ENCODE measurements at regions of chr22 and their contacts with region 1.

Region 1: DNA sequence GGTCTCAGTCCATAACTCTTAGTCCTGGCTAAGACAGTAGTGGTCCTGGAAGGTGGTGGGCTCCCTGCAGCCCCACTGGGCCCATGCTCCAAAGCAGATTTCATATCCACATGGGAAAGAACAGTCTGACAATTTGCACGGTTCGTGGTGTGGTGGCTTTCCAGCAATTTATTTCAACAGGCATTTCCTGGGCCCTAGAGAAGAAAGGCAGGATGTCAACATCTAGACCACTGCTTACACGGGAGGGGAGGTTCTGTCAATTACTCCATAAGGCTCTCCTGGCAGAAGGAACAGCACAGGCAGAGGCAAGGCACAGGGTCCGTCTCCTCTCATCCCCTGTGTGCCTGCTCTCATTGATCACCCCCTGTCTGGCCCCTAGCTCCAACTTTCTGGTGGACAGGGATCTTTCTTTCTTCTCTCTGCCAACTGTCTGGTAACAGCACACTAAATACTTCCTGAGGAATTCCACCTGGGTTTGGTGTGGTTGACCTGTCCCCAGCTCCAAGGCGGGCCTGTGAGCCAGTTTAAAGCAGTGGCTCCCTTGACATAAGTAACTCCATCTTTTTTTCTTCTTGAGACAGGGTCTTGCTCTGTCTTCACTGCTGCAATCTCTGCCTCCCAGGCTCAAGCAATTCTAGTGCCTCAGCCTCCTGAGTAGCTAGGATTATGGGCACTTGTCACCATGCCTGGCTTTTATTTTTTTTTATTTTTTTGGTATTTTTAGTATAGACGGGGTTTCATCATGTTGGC is 5.1 kb upstream of the A4GALT start:
- DNase-seq: no peak
- ATAC-seq: no peak
- H3K4me3 Mint-ChIP-seq: no peak overlapping the region
- H3K27ac Mint-ChIP-seq: no peak overlapping the region
- H3K4me1 Mint-ChIP-seq: peaks cover 16% of the 10 kb centered on the region
- H3K27me3 Mint-ChIP-seq: peaks cover 23% of the 10 kb centered on the region
- CTCF ChIP-seq: no peak

Region 2: DNA sequence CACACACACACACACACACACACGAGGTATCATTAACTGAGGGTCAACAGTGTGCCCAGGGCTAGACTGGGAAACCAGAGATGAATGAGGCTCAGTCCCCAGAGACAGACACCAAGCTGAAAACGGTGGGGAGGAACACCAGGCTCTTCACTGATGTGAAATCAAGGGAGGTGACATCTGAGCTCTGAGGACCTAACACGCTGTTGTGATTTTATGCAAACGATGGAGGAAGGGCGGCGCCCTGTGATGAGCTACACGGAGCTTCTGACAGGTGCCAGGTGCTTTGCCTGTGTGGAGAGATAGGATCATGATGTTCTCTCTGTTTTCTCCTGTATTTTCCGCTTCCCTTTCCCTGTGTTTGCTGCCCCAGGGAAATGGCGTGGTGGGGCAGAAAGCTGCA is 70.1 kb before region 1 on chr22:
- CTCF ChIA-PET with region 1: no interaction called
- POLR2A ChIA-PET with region 1: interaction called, 11 read pairs
- intact Hi-C with region 1: no loop called
- DNase-seq: peak; percentile 54
- ATAC-seq: peak; percentile 93
- H3K4me3 Mint-ChIP-seq: peak overlapping the region; percentile 65
- H3K27ac Mint-ChIP-seq: peak overlapping the region; percentile 81
- H3K4me1 Mint-ChIP-seq: peaks cover 46% of the 10 kb centered on the region
- H3K27me3 Mint-ChIP-seq: no peaks in the 10 kb centered on the region
- CTCF ChIP-seq: no peak